Tibial artery (tissue), 4 donors: ENCODE measurements at regions of chr11 and their contacts with region 1.

Region 1: DNA sequence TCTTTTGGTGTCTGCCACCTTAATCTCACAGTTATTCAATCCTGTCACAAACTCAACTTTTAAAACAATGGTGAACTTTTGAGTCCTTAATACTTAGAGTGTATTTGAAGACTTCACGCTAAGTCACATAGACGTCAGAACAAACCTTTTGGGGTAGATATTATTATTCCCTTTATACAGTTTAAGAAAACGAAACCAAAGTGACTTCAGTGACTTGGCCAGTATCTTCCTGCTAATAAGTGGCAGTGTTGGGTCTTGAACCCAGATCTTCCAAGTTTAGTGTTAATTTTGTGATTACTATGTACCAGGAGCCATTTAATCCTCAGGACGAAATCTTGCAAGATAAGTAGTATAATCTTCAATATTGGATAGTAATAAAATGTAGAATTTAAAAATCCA is 694 bp downstream of the CEP295 start:
- DNase-seq: no peak
- H3K4me3 ChIP-seq: peak overlapping the region; percentile 84 to 94
- H3K27ac ChIP-seq: peak overlapping the region; percentile 85 to 88
- H3K4me1 ChIP-seq: peaks cover 0 to 16% (median 9%) of the 10 kb centered on the region in 4 donors
- H3K27me3 ChIP-seq: no peaks in the 10 kb centered on the region
- CTCF ChIP-seq: no peak

Region 2: DNA sequence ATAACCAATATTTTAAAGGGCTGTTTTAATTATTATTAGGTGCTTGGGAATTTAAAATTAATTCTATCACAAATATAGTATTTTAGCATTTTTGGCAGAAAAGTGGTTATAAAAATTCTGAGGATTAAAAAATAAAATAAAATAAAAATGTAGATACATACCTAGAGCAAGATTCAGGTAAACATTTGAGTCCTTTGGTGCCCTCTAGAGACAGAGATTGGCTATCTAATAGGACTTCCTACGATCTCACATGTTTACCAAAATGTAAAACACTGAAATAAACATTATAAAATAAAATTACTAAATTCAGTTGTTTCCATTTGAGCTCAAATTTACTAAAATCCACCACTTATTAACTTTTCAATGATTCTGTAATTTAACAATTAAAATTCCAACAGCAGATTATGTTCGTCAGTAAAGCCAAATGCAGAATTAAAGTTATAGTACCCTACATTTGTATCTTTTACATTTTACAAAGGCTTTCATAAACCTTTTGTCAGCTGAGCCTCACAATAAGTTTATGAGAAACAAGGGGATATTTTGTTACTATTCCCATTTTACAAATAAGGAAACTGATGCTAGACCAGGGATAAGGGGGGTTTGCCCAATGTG is 492.1 kb before region 1 on chr11:
- intact Hi-C with region 1: no loop called
- DNase-seq: no peak
- H3K4me3 ChIP-seq: no peak overlapping the region
- H3K27ac ChIP-seq: no peak overlapping the region
- H3K4me1 ChIP-seq: no peaks in the 10 kb centered on the region
- H3K27me3 ChIP-seq: no peaks in the 10 kb centered on the region
- CTCF ChIP-seq: peak in 1 of 2 experiments; percentile 16

Region 3: GRCh38 chr11:93543292-93543977 is 118.7 kb before region 1 on chr11 and contains the start of gene SMCO4:
- intact Hi-C with region 1: loop called (anchors 5 kb)
- DNase-seq: peak; percentile 71 to 89
- H3K4me3 ChIP-seq: peak within 1 kb of the TSS; percentile 94 to 95
- H3K27ac ChIP-seq: peak within 1 kb of the TSS; percentile 92 to 96
- H3K4me1 ChIP-seq: peaks cover 0 to 28% (median 15%) of the 10 kb centered on the region in 4 donors
- H3K27me3 ChIP-seq: no peaks in the 10 kb centered on the region
- CTCF ChIP-seq: peak; percentile 78 to 79

Region 4: DNA sequence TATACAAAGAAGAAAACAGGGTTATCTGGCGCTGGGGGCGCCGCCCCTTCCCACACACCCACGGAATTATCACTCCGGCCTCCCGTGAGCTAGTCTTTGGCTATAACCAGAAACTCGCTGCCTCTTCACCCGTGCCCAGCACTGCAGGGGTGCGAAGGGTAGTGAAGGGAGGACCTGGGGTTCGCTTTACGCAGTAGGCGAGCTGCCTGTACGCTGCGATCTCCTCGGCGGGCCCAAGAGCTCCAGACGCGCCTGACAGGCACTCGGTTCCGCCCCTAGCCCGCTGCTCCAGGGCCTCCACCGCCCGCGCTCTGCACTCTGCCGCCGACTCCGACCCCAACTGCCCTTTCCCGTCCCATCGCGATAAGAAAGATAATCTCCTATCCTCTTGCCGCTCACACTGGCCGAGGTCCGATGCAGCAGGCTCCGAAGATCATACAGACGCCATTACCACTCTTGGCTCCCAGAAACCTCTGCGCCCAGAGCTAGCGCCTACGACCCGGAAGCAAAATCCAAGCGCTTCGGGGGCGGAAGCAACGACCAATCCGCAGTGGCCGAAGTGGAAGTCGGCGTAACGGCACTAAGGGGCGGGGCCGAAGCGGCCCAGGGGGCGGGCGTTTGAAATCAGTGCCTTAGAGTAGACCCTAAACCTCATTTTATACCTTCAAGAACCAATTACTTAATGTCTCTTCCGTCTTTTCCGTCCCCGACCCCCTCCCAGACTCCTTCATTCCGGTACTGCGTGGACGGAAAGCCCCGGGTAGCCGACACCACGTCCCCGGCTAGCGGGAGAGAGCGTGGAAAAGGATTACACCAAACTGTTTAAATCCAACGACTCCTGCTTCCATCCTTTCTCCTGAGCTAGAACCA is 1311.2 kb after region 1 on chr11 and contains the starts of genes CWC15 and KDM4D:
- intact Hi-C with region 1: loop called (anchors 10 kb)
- DNase-seq: peak; percentile 94 to 97
- H3K4me3 ChIP-seq: peak within 1 kb of the TSS; percentile 74 to 87
- H3K27ac ChIP-seq: peak within 1 kb of the TSS; percentile 77 to 86
- H3K4me1 ChIP-seq: peaks cover 0 to 16% (median 10%) of the 10 kb centered on the region in 4 donors
- H3K27me3 ChIP-seq: no peaks in the 10 kb centered on the region
- CTCF ChIP-seq: no peak